ENCODE measurements at regions of chr2 and their contacts with region 1.

Region 1: GRCh38 chr2:230541934-230542380 is 126.0 kb downstream of the SP100 start:
- DNase-seq: no peak
- H3K4me3 Mint-ChIP-seq: peak overlapping the region; percentile 48
- H3K27ac Mint-ChIP-seq: peak overlapping the region; percentile 85
- H3K4me1 Mint-ChIP-seq: peaks cover 61% of the 10 kb centered on the region
- H3K27me3 Mint-ChIP-seq: no peaks in the 10 kb centered on the region

Region 2: GRCh38 chr2:230441227-230441897 is 100.6 kb before region 1 on chr2:
- intact Hi-C with region 1: loop called (anchors 1 kb)
- DNase-seq: peak; percentile 34
- H3K4me3 Mint-ChIP-seq: peak overlapping the region; percentile 31
- H3K27ac Mint-ChIP-seq: peak overlapping the region; percentile 90
- H3K4me1 Mint-ChIP-seq: peaks cover 65% of the 10 kb centered on the region
- H3K27me3 Mint-ChIP-seq: no peaks in the 10 kb centered on the region

Region 3: GRCh38 chr2:230472621-230473018 is 69.3 kb before region 1 on chr2:
- intact Hi-C with region 1: loop called (anchors 1 kb)
- DNase-seq: peak; percentile 11
- H3K4me3 Mint-ChIP-seq: peak overlapping the region; percentile 1
- H3K27ac Mint-ChIP-seq: peak overlapping the region; percentile 85
- H3K4me1 Mint-ChIP-seq: peaks cover 48% of the 10 kb centered on the region
- H3K27me3 Mint-ChIP-seq: no peaks in the 10 kb centered on the region

Region 4: GRCh38 chr2:230582851-230583283 is 40.9 kb after region 1 on chr2:
- intact Hi-C with region 1: loop called (anchors 1 kb)
- DNase-seq: no peak
- H3K4me3 Mint-ChIP-seq: peak overlapping the region; percentile 24
- H3K27ac Mint-ChIP-seq: peak overlapping the region; percentile 62
- H3K4me1 Mint-ChIP-seq: peaks cover 27% of the 10 kb centered on the region
- H3K27me3 Mint-ChIP-seq: no peaks in the 10 kb centered on the region

Region 5: GRCh38 chr2:230902180-230902899 is 360.4 kb after region 1 on chr2:
- intact Hi-C with region 1: no loop called
- DNase-seq: no peak
- H3K4me3 Mint-ChIP-seq: no peak overlapping the region
- H3K27ac Mint-ChIP-seq: no peak overlapping the region
- H3K4me1 Mint-ChIP-seq: peaks cover 17% of the 10 kb centered on the region
- H3K27me3 Mint-ChIP-seq: peaks cover 64% of the 10 kb centered on the region